Left ventricle myocardium superior (tissue), 1 donor: ENCODE measurements at regions of chr2 and their contacts with region 1.

Region 1: DNA sequence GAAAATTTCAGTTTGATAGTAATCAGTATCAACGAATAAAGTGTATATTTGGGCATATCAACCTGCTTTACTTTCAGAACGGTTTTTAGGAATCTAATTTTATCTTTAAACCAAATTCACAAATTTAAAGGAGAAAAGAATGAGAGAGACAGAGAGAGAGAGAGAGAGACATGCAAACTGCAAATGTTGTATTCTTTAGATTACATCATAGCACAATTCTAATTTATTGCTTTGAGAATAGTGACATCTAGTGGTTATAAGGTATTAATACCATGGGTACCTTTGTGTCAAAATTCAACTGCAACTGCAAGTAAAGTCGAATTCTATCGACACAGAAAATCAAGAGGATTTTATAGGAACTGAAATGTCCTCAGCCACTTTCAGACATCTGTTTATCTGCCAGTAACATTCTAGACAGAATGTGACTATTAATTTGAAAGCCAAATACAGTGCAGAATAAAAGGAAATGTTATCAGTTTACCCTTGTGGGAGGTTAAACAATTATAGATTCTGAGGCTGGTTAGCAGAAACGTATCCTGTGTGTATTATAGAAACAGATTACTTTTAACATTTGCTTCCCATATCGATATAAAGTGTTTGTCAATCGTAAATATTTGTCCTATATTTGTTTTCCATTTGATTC is 529.8 kb upstream of the VRK2 start:
- DNase-seq: no peak
- ATAC-seq: no peak

Region 2: DNA sequence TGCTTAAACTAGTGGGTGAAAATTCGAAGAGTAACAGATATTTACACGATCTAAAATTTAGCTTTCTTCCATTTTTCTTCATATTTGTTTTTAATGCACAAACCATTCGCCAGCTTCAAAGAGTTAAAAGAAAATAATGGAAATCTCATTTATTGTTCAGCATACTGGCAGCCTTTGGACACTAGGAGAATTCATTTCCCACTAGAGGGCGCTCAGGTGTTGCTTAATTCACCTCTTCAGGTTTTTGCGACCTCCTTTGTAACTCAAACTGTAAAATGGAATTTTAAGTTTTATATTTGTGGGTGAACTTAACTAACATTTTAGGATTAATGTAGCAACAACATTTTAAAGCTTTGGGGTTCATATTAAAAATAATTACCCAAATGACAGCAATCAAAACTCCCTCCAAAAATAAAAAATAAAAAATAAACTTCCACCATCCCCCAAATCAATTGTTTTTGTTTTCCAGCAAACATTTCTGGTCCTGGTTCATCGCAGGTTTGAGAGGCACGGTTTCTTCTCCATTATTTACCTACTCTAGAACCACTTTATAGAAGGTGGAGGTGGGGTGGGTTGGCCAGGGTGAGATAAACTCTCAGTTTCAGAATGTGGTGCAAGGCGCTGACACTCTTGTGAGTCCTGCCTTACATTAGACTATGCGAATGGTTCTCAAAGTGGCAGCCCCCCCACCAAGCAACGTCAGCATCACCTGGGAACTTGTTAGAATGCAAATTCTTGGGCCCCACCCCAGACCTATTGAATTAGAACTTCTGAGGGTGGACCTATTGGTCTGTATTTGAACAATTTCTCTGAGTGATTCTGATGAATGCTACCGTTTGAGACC is 1798.4 kb before region 1 on chr2:
- intact Hi-C with region 1: loop called (anchors 10 kb)
- DNase-seq: no peak
- ATAC-seq: peak; percentile 49

Region 3: GRCh38 chr2:57461624-57462023 is 55.2 kb before region 1 on chr2:
- intact Hi-C with region 1: no loop called
- DNase-seq: no peak
- ATAC-seq: no peak

Region 4: DNA sequence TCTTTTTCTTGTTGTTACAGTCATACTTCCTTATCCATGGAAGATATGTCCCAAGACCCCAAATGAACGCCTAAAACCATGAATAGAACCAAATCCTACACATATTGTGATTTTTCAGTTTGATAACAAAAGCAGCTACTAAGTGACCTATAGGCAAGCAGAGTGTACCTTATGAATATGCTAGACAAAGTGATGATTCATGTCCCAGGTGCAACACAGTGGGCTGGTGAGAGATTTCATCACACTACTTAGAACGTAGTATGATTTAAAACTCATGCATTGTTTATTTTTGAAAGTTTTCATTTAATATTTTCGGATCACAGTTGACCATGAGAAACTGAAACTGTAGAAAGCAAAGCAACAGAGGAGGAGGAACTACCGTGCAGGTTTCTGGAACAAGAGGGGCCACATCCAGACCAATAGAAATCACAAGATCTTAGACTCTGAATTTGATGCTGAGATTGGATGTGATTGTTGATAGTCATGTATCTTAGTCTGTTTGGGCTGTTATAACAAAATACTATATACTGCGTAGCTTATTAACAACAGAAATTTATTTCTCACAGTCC is 59.0 kb after region 1 on chr2:
- intact Hi-C with region 1: no loop called
- DNase-seq: no peak
- ATAC-seq: no peak

Region 5: GRCh38 chr2:57990118-57990725 is 473.4 kb after region 1 on chr2:
- intact Hi-C with region 1: no loop called
- DNase-seq: no peak
- ATAC-seq: no peak